ENCODE measurements at regions of chr7 and their contacts with region 1.

Region 1: DNA sequence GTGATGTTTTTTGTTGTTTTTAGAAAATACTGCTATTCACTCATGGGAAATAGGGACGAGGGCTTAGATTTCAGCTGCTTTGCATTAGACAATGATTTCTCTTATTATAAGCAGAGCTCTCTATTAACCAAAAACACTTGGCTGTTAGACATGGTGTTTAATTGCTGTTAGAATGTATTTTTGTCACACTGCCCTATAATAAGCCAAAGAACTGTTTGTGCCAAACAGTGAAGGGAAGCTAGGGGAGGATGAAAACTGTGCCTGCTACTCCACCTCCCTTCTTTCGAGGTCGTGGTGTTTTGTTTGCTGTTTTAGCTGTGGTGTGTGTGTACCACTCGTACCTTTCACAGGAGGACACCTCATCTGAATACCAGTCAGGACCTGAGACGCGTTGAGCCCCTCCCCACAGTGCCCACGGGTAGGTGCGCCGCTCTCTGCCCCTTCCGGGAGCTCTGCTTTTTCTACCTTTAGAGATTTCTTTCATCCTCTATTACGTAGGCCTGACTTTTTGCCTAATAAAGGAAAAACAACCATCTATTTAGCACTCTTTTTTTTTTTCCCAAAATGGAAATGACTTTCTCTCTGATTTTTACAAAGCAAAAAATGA is 58.0 kb downstream of the CUX1 start:
- DNase-seq: no peak
- ATAC-seq: no peak
- H3K4me3 Mint-ChIP-seq: no peak overlapping the region
- H3K27ac Mint-ChIP-seq: no peak overlapping the region
- H3K4me1 Mint-ChIP-seq: peaks cover 8% of the 10 kb centered on the region
- H3K27me3 Mint-ChIP-seq: no peaks in the 10 kb centered on the region

Region 2: GRCh38 chr7:101667920-101668319 is 207.5 kb before region 1 on chr7:
- CTCF ChIA-PET with region 1: no interaction called
- POLR2A ChIA-PET with region 1: interaction called, 10 read pairs
- intact Hi-C with region 1: no loop called
- DNase-seq: no peak
- ATAC-seq: no peak
- H3K4me3 Mint-ChIP-seq: no peak overlapping the region
- H3K27ac Mint-ChIP-seq: no peak overlapping the region
- H3K4me1 Mint-ChIP-seq: no peaks in the 10 kb centered on the region
- H3K27me3 Mint-ChIP-seq: peaks cover 2% of the 10 kb centered on the region

Measured in activated CD4-positive, alpha-beta T cell treated with anti-CD3 and anti-CD28 coated beads for 36 hours (primary cell).